PC-9 (cell line): ENCODE measurements at regions of chr4 and their contacts with region 1.

Region 1: GRCh38 chr4:177546745-177547144 is 104.5 kb upstream of the AGA start:
- DNase-seq: no peak
- H3K4me3 ChIP-seq: no peak overlapping the region
- H3K27ac ChIP-seq: no peak overlapping the region
- H3K4me1 ChIP-seq: no peaks in the 10 kb centered on the region
- H3K27me3 ChIP-seq: no peaks in the 10 kb centered on the region
- CTCF ChIP-seq: 0 out of 2 replicates have a peak, but pooled peaks have one; percentile 27

Region 2: GRCh38 chr4:177464026-177464425 is 82.7 kb before region 1 on chr4:
- CTCF ChIA-PET with region 1: interaction called, 13 read pairs
- POLR2A ChIA-PET with region 1: no interaction called
- intact Hi-C with region 1: no loop called
- DNase-seq: no peak
- H3K4me3 ChIP-seq: no peak overlapping the region
- H3K27ac ChIP-seq: no peak overlapping the region
- H3K4me1 ChIP-seq: no peaks in the 10 kb centered on the region
- H3K27me3 ChIP-seq: no peaks in the 10 kb centered on the region
- CTCF ChIP-seq: no peak